HCT116 (cell line): ENCODE measurements at regions of chr1 and their contacts with region 1.

Region 1: DNA sequence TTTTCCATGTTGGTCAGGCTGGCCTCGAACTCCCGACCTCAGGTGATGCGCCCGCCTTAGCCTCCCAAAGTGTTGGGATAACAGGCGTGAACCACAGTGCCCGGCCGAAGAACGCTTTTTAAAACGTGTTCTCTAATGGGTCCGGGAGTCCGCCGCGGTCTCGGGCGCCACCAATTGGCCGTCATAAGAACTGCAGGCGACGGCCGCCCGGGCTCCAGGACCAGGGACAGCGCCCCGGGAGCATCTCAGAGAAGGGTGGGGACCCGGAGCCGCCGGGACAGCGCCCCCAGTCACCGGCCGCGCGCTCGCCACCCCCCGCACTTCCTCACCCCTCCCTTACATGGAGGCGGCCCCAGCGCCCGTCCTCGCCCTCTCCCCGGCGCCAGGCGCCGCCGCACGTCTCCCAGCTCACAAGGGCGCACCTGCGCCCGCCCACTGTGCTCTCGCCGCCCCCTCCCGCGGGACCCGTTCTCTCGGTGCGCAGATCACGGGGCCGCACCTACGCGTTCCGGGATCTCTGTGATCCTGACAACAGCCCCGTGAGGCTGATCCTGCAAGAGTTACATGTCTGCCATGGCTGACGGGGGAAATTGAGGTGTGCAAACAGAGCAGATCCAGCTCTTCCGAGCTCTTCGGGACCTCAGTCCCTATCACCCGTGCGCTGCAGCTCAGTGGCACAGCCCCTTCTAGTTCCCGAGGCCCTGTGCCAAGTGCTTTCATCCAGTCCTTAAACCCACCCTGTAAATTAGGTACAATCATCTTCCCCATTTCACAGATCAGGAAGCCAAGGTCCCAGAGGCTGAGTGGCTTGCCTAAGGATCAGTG is 9.8 kb downstream of the RAP1GAP start:
- DNase-seq: peak; percentile 51
- ATAC-seq: peak; percentile 83
- H3K4me3 ChIP-seq: peak overlapping the region; percentile 31 to 51
- H3K27ac ChIP-seq: peak overlapping the region; percentile 29; the same call in 1 of the 2 replicates
- H3K4me1 ChIP-seq: peaks cover 5 to 26% of the 10 kb centered on the region in 2 experiments; a peak in 3 of 4 replicates
- H3K27me3 ChIP-seq: no peaks in the 10 kb centered on the region
- CTCF ChIP-seq: peak; percentile 82 to 89 (median 86); a peak in 5 of 6 replicates
- POLR2A ChIP-seq: no peak
- RAD21 ChIP-seq: peak; percentile 95

Region 2: GRCh38 chr1:21384620-21385019 is 274.7 kb before region 1 on chr1:
- CTCF ChIA-PET with region 1: no interaction called
- POLR2A ChIA-PET with region 1: no interaction called
- RAD21 ChIA-PET with region 1: no interaction called
- intact Hi-C with region 1: no loop called
- DNase-seq: no peak
- ATAC-seq: no peak
- H3K4me3 ChIP-seq: no peak overlapping the region
- H3K27ac ChIP-seq: no peak overlapping the region
- H3K4me1 ChIP-seq: no peaks in the 10 kb centered on the region
- H3K27me3 ChIP-seq: no peaks in the 10 kb centered on the region
- CTCF ChIP-seq: no peak
- POLR2A ChIP-seq: no peak
- RAD21 ChIP-seq: no peak

Region 3: DNA sequence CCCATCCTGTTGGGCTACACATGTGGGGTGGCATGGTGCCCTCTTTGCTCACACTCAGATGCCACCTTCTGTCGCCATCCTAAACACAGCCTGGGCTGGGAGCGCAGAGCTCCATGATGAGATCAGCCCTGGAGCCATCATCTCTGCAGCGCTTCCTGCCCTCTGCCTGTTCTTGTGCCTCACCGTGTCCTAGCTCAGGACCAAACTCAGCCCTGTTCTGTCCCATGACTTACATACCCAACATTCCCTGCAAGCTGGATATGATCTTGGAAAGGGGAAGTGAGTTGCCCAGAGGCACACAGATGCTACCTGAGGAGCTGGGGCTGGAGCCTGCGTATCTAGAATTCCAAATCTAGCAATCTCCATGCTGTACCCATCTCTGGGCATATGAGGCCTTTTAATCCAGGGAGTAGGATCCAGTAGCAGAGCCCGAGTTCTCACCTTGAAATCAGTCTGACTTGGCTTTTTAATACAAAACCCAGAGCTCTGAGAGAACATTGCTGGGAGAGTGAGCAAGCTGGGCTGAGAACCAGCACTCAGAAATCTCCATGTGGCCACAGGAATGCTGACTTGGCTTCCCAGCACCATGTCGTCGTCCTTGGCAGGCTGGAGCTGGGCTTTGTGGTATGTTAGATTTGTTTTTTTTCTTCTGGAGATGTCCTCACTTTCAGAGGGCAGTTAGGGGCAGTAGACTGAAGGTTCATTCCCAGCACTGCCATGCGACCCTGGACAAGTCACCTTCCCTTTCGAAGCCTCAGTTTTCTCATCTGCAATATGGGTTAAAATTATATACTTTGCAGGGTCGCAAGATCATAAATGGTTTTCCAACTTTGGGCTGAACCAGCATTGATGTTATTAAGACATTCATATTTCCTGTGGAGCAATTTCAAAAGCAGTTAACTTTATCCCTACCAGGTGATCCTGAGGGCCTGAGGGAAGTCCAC is 147.5 kb before region 1 on chr1:
- CTCF ChIA-PET with region 1: no interaction called
- POLR2A ChIA-PET with region 1: no interaction called
- RAD21 ChIA-PET with region 1: no interaction called
- intact Hi-C with region 1: loop called (anchors 10 kb)
- DNase-seq: no peak
- ATAC-seq: no peak
- H3K4me3 ChIP-seq: no peak overlapping the region
- H3K27ac ChIP-seq: no peak overlapping the region
- H3K4me1 ChIP-seq: peaks cover 2 to 5% of the 10 kb centered on the region in 2 experiments; a peak in 3 of 4 replicates
- H3K27me3 ChIP-seq: no peaks in the 10 kb centered on the region
- CTCF ChIP-seq: no peak
- POLR2A ChIP-seq: no peak
- RAD21 ChIP-seq: no peak

Region 4: DNA sequence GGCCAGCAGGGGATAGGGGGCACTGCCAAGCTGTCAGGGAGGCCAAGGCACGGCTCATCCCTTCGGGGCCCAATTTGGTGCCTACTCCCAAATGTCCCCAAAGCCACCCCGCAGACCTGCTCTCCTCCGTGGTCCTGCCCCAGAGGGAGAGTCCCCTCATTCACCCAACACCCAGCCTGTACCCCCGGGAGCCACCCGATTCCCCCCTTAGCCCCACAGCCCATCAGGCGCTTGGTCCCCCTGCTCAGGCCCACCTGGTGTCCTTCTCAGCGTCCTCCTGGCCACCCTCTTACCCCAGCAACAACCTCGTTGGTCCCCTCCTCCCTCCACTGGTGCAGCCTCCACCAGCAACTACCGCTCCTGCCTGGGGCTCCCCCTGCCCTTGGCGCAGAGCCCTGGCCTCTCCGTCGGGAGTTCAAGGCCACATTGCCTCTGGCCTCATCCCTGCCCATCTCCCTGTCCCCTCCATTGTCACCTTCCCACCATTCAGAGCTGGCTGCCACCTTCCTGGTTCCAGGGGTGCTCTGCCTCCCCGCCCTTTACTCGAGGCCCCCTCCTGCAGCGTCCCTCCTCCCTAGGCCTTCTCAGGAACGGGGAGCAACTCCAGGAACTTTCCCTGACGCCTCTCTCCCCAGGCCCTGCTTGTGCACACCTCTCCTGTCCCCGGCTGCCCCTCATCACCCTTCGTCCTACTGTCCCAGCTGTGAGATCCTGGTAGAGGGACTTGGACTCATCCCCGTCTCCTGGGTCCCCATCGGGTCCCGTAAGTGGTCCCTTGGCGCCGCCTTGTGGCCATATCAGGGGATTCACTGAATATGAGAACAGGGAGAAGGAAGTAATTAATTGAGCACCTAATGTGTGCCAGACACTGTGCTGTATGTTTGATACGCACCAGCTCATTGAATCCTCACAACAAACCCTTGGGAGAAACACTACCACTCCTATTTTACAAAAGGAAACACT is 64.1 kb before region 1 on chr1:
- CTCF ChIA-PET with region 1: no interaction called
- POLR2A ChIA-PET with region 1: no interaction called
- RAD21 ChIA-PET with region 1: interaction called in 1 of 2 experiments, 3 read pairs
- intact Hi-C with region 1: loop called (anchors 1 kb)
- DNase-seq: peak; percentile 23
- ATAC-seq: peak; percentile 78
- H3K4me3 ChIP-seq: no peak overlapping the region
- H3K27ac ChIP-seq: no peak overlapping the region
- H3K4me1 ChIP-seq: peaks cover 7 to 13% of the 10 kb centered on the region in 2 experiments; a peak in 3 of 4 replicates
- H3K27me3 ChIP-seq: no peaks in the 10 kb centered on the region
- CTCF ChIP-seq: peak; percentile 70 to 90 (median 76)
- POLR2A ChIP-seq: no peak
- RAD21 ChIP-seq: peak; percentile 92

Region 5: DNA sequence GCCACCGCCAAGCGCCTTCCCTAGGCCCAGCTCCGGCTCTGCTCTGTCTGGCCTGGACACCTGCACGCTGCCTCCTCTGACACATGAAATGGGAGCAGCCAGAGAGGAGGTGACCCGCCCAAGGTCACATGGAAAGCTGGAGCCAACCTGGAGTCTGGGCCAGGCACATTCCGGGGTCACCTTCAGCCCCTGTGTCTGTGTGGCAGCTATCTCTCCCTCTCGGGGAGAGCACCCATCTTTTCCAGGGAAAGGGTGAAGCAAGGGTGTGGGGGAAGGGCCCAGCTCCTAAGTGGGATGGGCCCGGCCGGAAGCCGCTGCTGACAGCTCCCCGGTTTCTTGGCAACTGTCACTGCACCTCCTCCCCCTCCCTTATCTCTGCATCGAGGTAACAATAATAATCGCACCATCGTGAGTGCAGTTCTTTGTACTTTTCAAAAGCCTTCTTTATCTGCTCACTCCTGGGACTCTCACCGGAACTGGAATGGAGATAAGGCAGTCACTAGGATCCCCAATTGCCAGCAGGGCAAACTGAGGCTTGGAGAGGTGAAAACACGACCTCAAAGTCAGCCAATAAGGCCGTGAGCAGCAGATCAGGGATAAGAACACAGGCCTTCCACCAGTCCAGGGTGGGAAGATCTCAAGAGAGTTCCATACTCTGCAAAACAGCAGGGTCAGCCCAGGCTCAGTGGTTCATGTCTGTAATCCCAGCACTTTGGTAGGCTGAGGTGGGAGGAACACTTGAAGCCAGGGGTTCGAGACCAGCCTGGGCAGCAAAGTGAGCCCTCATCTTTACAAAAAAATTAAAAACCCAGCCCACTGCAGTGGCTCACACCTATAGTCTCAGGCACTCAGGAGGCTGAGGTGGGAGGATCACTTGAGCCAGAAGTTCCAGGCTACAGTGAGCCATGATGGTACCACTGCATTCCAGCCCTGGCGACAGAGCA is 27.1 kb before region 1 on chr1:
- CTCF ChIA-PET with region 1: no interaction called
- POLR2A ChIA-PET with region 1: no interaction called
- RAD21 ChIA-PET with region 1: no interaction called
- intact Hi-C with region 1: no loop called
- DNase-seq: no peak
- ATAC-seq: no peak
- H3K4me3 ChIP-seq: no peak overlapping the region
- H3K27ac ChIP-seq: no peak overlapping the region
- H3K4me1 ChIP-seq: peaks cover 7 to 20% of the 10 kb centered on the region in 2 experiments; a peak in 3 of 4 replicates
- H3K27me3 ChIP-seq: no peaks in the 10 kb centered on the region
- CTCF ChIP-seq: no peak
- POLR2A ChIP-seq: no peak
- RAD21 ChIP-seq: no peak

Region 6: DNA sequence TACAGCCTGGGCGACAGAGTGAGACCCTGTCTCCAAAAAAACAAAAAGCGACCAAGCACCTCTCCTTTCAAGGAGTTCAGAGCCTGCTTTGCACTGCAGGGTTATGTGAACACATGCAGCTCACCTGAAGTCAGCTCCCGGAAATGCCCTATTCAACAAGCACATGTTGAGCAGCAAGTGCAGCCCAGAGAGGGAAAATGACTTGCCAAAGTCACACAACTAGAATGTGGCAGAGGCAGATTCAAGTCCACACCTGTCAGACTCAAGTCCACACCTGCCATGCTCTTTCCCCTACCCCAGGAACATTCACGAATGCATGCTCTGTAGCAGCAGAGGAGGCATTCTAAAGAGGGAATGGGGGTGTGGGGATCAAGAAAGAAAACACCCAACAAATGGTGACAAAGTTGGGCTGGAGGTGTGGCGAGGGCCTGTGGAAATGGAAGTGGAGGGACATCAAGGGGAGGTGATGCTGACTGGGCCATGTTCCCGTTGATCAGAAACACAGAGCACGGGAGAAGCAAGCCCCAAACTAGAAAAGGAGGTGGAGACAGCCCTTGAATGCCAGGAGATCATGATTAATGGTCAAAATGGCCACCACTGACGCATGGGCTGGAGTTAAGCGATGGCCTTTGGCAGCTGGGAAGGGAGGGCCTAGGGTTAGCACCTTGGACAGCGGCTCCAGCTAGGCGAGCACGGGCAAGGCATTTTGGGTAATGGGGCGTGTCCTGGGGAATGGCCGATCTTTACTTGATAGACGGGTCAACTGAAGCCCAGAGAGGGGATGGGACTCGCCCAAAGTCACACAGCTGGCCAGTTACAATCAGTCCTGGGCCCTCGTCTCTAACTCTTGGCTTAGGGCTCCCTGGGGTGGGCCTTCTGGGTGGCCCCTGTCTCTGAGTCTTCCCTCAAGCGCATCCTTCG is 11.6 kb before region 1 on chr1:
- CTCF ChIA-PET with region 1: interaction called, 8 read pairs
- POLR2A ChIA-PET with region 1: no interaction called
- RAD21 ChIA-PET with region 1: no interaction called
- intact Hi-C with region 1: loop called (anchors 1 kb)
- DNase-seq: peak; percentile 67
- ATAC-seq: peak; percentile 82
- H3K4me3 ChIP-seq: no peak overlapping the region
- H3K27ac ChIP-seq: no peak overlapping the region
- H3K4me1 ChIP-seq: peaks cover 6 to 28% of the 10 kb centered on the region in 2 experiments
- H3K27me3 ChIP-seq: no peaks in the 10 kb centered on the region
- CTCF ChIP-seq: no peak
- POLR2A ChIP-seq: no peak
- RAD21 ChIP-seq: no peak

Region 7: DNA sequence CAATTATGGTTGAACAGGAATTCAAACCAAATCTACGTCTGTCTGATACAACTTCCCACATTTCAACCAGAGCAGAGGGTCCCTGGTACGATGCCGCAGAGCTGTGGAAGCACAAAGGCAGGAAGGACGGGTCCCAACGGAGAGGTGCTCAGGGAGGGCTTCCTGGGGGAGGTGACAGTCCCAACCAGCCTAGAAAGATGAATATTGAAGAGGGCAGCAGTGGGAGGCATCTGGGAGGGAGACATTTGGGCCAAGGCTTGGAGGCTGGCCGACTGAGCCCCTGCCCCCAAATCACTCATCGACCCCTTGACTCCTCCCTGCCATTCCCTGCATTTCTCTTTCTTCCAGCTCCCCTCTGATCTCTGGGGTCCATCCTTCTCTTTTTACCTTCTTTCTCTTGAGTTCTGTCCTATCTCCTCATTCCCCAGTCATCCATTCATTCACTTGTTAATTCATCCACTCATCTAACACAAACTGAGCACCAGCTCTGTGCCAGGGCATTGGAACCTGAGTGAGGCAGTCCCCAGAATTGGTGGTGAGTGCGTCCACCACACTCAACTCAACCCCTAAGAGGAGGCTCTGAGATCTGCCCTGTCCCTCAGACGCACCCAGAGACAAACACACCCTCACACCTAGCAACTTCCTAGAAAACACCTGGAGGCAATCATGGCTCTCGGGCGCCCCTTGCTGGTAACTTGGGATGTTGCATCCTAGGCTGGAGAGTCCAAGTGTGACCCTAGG is 304.3 kb after region 1 on chr1:
- CTCF ChIA-PET with region 1: no interaction called
- POLR2A ChIA-PET with region 1: no interaction called
- RAD21 ChIA-PET with region 1: no interaction called
- intact Hi-C with region 1: loop called (anchors 5 kb)
- DNase-seq: peak; percentile 47
- ATAC-seq: peak; percentile 91
- H3K4me3 ChIP-seq: no peak overlapping the region
- H3K27ac ChIP-seq: no peak overlapping the region
- H3K4me1 ChIP-seq: peaks cover 3 to 13% of the 10 kb centered on the region in 2 experiments; a peak in 3 of 4 replicates
- H3K27me3 ChIP-seq: no peaks in the 10 kb centered on the region
- CTCF ChIP-seq: peak; percentile 91 to 97 (median 92)
- POLR2A ChIP-seq: no peak
- RAD21 ChIP-seq: peak; percentile 99